ENCODE measurements at regions of chr3 and their contacts with region 1.

Region 1: GRCh38 chr3:161220850-161221753 is at the start of gene NMD3:
- DNase-seq: peak; percentile 97
- H3K4me3 Mint-ChIP-seq: peak within 1 kb of the TSS; percentile 87
- H3K27ac Mint-ChIP-seq: peak within 1 kb of the TSS; percentile 88
- H3K4me1 Mint-ChIP-seq: peaks cover 28% of the 10 kb centered on the region
- H3K27me3 Mint-ChIP-seq: peaks cover 2% of the 10 kb centered on the region
- total RNA-seq, gene NMD3: 58.1 to 59.4 TPM

Region 2: GRCh38 chr3:160449636-160450598 is 771.2 kb before region 1 on chr3 and contains the start of gene TRIM59:
- CTCF ChIA-PET with region 1: no interaction called
- intact Hi-C with region 1: loop called (anchors 1 kb)
- DNase-seq: peak; percentile 98
- H3K4me3 Mint-ChIP-seq: peak within 1 kb of the TSS; percentile 91
- H3K27ac Mint-ChIP-seq: peak within 1 kb of the TSS; percentile 90
- H3K4me1 Mint-ChIP-seq: peaks cover 26% of the 10 kb centered on the region
- H3K27me3 Mint-ChIP-seq: no peaks in the 10 kb centered on the region
- total RNA-seq, gene TRIM59: 25.8 TPM

Region 3: GRCh38 chr3:160754855-160755747 is 466.0 kb before region 1 on chr3:
- CTCF ChIA-PET with region 1: no interaction called
- intact Hi-C with region 1: loop called (anchors 1 kb)
- DNase-seq: peak; percentile 90
- H3K4me3 Mint-ChIP-seq: peak overlapping the region; percentile 86
- H3K27ac Mint-ChIP-seq: peak overlapping the region; percentile 86
- H3K4me1 Mint-ChIP-seq: peaks cover 23% of the 10 kb centered on the region
- H3K27me3 Mint-ChIP-seq: peaks cover 12% of the 10 kb centered on the region

Region 4: DNA sequence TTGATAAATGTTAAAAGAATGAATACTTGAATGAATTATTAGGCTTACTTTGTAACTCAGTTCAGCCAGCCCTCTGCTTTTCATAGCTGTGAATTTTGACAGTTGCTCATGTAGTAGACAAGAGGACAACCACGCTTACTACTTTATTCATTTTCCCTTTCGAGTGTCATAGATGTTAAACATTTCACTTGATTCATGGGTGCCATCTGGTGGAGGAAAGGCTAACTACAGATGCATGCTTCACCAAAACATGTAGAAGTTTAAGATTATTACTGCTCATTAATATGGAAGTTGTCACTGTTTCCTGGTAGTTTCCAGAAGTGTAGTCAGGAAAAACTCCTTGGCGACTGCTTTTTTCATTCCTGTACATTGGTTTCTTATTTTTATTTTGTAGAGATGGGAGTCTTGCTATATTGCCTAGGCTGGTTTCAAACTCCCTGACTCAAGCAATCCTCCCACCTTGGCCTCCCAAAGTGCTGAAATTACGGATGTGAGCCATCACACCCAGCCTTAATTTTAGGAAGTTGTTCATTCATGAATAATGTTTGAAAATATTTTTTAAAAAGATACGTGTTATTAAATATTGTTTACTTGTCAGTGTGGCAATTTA is 279.1 kb before region 1 on chr3:
- CTCF ChIA-PET with region 1: no interaction called
- intact Hi-C with region 1: no loop called
- DNase-seq: peak; percentile 88
- H3K4me3 Mint-ChIP-seq: no peak overlapping the region
- H3K27ac Mint-ChIP-seq: no peak overlapping the region
- H3K4me1 Mint-ChIP-seq: no peaks in the 10 kb centered on the region
- H3K27me3 Mint-ChIP-seq: no peaks in the 10 kb centered on the region

Region 5: GRCh38 chr3:161104561-161105551 is 116.2 kb before region 1 on chr3 and contains the start of gene B3GALNT1:
- CTCF ChIA-PET with region 1: interaction called, 5 read pairs
- intact Hi-C with region 1: loop called (anchors 5 kb)
- DNase-seq: peak; percentile 26
- H3K4me3 Mint-ChIP-seq: peak within 1 kb of the TSS; percentile 63
- H3K27ac Mint-ChIP-seq: no peak within 1 kb of the TSS
- H3K4me1 Mint-ChIP-seq: peaks cover 8% of the 10 kb centered on the region
- H3K27me3 Mint-ChIP-seq: peaks cover 21% of the 10 kb centered on the region
- total RNA-seq, gene B3GALNT1: 0.76 to 1.1 TPM

Region 6: DNA sequence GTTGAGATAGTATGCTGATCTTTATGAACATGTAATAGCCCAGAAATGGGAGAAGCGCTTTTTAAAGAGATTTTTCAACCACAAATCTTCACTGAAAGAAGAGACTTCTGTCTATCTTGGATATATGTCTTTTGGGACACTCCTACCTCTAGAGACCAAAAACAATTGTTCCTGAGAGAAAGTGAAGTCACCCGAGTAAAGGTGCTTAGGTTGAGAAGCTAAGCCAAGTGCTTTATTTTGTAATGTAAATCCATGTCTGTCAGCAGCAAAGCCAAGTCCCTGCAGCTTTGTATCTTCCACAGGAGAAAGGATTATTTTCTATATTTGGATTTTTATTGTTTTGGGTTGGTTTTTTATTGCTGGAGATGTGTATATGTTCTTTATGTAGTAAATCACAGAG is 83.8 kb before region 1 on chr3:
- CTCF ChIA-PET with region 1: no interaction called
- intact Hi-C with region 1: no loop called
- DNase-seq: no peak
- H3K4me3 Mint-ChIP-seq: no peak overlapping the region
- H3K27ac Mint-ChIP-seq: no peak overlapping the region
- H3K4me1 Mint-ChIP-seq: no peaks in the 10 kb centered on the region
- H3K27me3 Mint-ChIP-seq: peaks cover 2% of the 10 kb centered on the region

Region 7: DNA sequence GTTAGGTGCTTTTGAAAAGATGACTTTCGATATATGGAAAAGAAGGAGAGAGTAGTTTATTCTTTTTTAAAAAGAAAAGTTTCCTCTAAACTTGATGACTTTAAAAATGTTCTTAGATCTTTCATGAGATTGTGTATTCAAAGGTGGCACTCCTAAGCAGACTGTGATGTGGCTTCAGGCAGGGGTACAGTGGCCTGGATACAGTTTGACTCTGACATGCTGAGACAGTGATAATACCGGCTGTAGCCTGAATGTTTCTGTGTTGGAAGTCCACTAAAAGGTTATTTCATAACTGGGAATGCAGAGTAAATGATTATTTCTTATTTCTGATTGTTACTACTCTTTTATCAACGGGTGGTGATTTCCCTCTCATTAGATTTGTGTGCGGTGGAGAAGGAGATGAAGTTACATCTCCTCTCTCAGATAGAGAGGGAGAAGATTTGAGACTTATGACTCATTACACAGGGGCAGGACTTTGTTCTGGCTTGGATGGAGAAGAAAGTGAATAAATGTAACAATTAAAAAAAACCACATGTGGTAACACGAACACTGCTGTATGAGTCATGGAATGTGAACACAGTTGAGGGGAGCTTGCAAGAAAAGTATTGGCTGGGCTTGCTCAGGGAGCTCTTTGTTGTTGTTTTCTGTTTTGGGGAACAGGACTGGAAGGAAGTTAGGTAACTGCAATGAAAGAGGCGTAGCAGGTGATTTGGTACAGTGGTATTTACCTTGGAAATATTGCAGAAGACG is 128.6 kb after region 1 on chr3:
- CTCF ChIA-PET with region 1: no interaction called
- intact Hi-C with region 1: loop called (anchors 1 kb)
- DNase-seq: peak; percentile 47
- H3K4me3 Mint-ChIP-seq: no peak overlapping the region
- H3K27ac Mint-ChIP-seq: no peak overlapping the region
- H3K4me1 Mint-ChIP-seq: peaks cover 27% of the 10 kb centered on the region
- H3K27me3 Mint-ChIP-seq: no peaks in the 10 kb centered on the region